Aorta (tissue), 5 donors: ENCODE measurements at regions of chr9 and their contacts with region 1.

Region 1: GRCh38 chr9:130172161-130172857 is at the start of gene NCS1:
- DNase-seq: peak; percentile 85 to 95
- ATAC-seq: peak; percentile 78
- H3K4me3 ChIP-seq: peak within 1 kb of the TSS; percentile 75 to 85
- H3K27ac ChIP-seq: peak within 1 kb of the TSS; percentile 15 to 86
- H3K4me1 ChIP-seq: peaks cover 0 to 5% of the 10 kb centered on the region in 2 donors
- H3K27me3 ChIP-seq: no peaks in the 10 kb centered on the region
- total RNA-seq, gene NCS1: 72.1 to 171 TPM

Region 2: GRCh38 chr9:130208600-130209347 is 36.5 kb after region 1 on chr9:
- intact Hi-C with region 1: loop called (anchors 5 kb)
- DNase-seq: peak in 1 of 2 donors; percentile 21
- ATAC-seq: no peak
- H3K4me3 ChIP-seq: no peak overlapping the region
- H3K27ac ChIP-seq: peak overlapping the region in 1 of 2 donors; percentile 53
- H3K4me1 ChIP-seq: no peaks in the 10 kb centered on the region
- H3K27me3 ChIP-seq: no peaks in the 10 kb centered on the region

Region 3: DNA sequence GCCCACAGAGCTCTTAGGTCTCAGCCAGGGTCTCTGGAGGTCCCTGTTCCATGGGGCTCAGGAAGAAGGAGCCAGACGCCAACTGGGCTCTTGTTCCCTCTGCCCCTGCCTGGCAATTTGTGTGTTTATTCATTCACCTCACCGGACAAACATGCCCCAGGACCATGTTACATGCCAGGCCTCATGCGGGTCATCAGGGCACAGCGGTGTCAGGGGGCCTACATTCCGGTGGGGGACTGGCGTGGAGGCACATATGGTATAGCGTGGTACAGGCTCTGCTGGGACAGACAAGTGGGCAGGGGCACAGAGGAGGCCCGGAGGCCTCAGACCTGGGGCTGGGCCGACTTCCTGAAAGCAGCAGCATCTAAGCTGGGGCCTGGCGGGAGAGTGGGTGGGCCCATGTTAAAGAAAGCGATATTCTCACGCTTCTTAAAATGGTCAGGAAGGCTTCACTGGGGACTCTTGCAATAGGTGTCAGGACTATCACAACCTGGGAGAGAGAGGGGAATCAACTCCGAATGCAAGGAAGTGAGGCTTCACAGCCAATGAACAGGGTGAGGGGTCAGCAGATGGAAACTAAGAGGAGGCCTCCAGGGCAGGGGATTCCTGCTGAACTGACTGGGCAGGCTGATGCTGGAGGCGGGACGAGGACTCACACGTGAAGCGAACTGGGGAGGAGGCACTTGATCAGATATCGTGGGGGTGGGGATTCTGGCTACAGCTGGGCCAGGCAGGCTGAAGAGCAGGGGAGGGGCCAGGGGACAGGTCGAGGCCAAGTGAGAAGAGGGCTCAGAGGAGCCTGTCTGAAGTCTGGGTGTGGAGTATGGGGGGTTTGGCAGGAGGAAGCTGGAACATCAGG is 41.8 kb after region 1 on chr9:
- intact Hi-C with region 1: loop called (anchors 5 kb)
- DNase-seq: peak in 1 of 2 donors; percentile 52
- ATAC-seq: no peak
- H3K4me3 ChIP-seq: no peak overlapping the region
- H3K27ac ChIP-seq: no peak overlapping the region
- H3K4me1 ChIP-seq: no peaks in the 10 kb centered on the region
- H3K27me3 ChIP-seq: no peaks in the 10 kb centered on the region